ENCODE measurements at regions of chr2 and their contacts with region 1.

Region 1: GRCh38 chr2:215205787-215206186 is 67.4 kb upstream of the ABCA12 start:
- DNase-seq: no peak
- ATAC-seq: no peak
- H3K4me3 ChIP-seq: no peak overlapping the region
- H3K4me3 Mint-ChIP-seq: no peak overlapping the region
- H3K27ac ChIP-seq: no peak overlapping the region
- H3K27ac Mint-ChIP-seq: no peak overlapping the region
- H3K4me1 ChIP-seq: no peaks in the 10 kb centered on the region
- H3K4me1 Mint-ChIP-seq: no peaks in the 10 kb centered on the region
- H3K27me3 ChIP-seq: peaks cover 0 to 4% of the 10 kb centered on the region in 2 experiments
- H3K27me3 Mint-ChIP-seq: peaks cover 4% of the 10 kb centered on the region in 2 donors

Region 2: DNA sequence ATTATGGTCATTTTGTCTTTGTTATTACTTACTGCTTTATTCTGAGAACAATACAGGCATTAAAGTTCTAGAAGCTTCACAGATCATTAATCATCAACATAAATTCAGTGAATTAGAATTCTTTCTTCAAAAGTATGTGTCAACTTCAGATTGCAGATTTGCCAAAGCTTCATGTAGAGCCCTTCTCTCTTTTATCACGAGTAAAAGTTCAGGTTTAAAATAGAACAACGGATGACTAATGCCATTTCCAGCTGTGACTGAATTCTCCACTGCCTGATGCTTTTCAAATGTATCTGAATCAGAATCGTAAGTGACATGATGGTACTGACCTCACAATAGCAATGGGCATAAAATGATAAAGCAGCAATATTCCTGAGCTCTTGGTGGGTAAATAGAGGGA is 183.4 kb before region 1 on chr2:
- CTCF ChIA-PET with region 1: no interaction called
- POLR2A ChIA-PET with region 1: no interaction called
- DNase-seq: no peak
- ATAC-seq: no peak
- H3K4me3 ChIP-seq: no peak overlapping the region
- H3K4me3 Mint-ChIP-seq: no peak overlapping the region
- H3K27ac ChIP-seq: no peak overlapping the region
- H3K27ac Mint-ChIP-seq: no peak overlapping the region
- H3K4me1 ChIP-seq: no peaks in the 10 kb centered on the region
- H3K4me1 Mint-ChIP-seq: no peaks in the 10 kb centered on the region
- H3K27me3 ChIP-seq: no peaks in the 10 kb centered on the region
- H3K27me3 Mint-ChIP-seq: no peaks in the 10 kb centered on the region

Region 3: GRCh38 chr2:215241791-215242305 is 36.1 kb after region 1 on chr2:
- CTCF ChIA-PET with region 1: no interaction called
- POLR2A ChIA-PET with region 1: interaction called in 1 of 2 experiments, 10 read pairs
- DNase-seq: no peak
- ATAC-seq: no peak
- H3K4me3 ChIP-seq: no peak overlapping the region
- H3K4me3 Mint-ChIP-seq: no peak overlapping the region
- H3K27ac ChIP-seq: no peak overlapping the region
- H3K27ac Mint-ChIP-seq: no peak overlapping the region
- H3K4me1 ChIP-seq: no peaks in the 10 kb centered on the region
- H3K4me1 Mint-ChIP-seq: no peaks in the 10 kb centered on the region
- H3K27me3 ChIP-seq: peaks cover 0 to 4% of the 10 kb centered on the region in 2 experiments
- H3K27me3 Mint-ChIP-seq: peaks cover 5 to 8% of the 10 kb centered on the region in 2 donors

Region 4: DNA sequence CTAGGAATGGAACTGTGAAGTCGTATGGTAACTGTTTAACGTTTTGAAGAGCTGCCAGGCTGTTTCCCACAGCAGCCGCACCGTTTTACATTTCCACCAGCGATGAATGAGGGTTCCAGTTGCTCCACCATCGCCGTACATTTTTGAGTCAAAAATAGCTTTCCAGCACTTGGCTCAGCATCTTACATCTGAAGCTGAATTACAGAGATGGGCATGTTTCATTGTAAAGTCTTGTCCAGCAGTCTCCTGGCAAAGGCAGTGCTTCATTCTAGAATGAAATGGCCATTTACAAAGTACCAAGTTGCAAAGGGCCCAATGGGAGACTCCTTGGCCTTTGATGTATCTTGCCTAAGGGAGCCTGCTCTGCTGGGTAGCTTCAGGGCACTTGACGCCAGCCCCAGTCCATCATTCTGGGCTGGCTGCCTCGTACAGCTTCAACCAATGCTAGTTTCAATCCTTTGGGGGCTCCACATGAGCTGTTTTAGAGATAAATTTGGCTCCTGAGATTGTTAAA is 151.2 kb after region 1 on chr2:
- CTCF ChIA-PET with region 1: no interaction called
- POLR2A ChIA-PET with region 1: no interaction called
- DNase-seq: no peak
- ATAC-seq: no peak
- H3K4me3 ChIP-seq: no peak overlapping the region
- H3K4me3 Mint-ChIP-seq: no peak overlapping the region
- H3K27ac ChIP-seq: no peak overlapping the region
- H3K27ac Mint-ChIP-seq: no peak overlapping the region
- H3K4me1 ChIP-seq: no peaks in the 10 kb centered on the region
- H3K4me1 Mint-ChIP-seq: no peaks in the 10 kb centered on the region
- H3K27me3 ChIP-seq: no peaks in the 10 kb centered on the region
- H3K27me3 Mint-ChIP-seq: no peaks in the 10 kb centered on the region

Region 5: DNA sequence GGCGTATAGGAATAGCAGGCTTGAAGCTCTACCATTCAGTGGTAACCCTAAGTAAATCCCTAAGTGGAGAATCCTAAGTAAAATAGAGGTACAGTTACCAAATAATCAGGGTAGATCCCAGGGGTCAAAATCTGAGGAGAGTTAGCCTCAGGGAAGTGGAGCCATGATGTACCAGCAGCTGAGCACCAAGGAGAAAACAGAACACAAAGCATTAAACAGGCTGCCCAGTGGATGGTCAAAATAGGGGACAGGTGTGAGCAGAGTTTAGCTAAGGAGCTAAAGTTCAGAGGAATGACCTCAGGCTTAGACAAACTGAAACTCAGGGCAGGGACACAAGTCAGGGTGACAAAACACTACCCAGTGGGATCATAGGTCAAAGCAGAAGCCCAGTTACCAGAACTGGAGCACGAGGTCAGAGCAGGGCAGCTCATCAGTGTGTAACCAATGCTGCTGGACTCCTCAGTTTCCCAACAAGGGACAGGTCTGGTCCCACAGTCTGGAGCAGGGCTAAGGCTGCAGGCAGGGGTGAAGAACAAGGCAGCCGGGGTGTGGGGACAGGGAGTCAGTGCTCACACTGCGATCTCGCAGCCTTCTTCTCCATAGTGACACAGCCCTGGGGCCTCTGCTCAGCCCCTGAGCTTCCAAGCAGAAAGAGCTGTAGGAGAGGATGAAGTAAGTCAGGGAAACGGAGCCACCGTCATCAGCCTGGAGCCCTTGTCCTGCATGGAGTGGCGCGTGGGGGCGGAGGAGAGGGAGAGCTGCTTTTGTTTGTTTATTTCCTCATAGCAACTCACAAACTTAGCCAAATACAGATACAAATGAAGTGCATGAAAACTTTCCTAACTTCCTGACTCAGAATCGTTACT is 543.5 kb after region 1 on chr2:
- CTCF ChIA-PET with region 1: no interaction called
- POLR2A ChIA-PET with region 1: no interaction called
- DNase-seq: peak in 1 of 35 experiments; percentile 4
- ATAC-seq: no peak
- H3K4me3 ChIP-seq: no peak overlapping the region
- H3K4me3 Mint-ChIP-seq: no peak overlapping the region
- H3K27ac ChIP-seq: no peak overlapping the region
- H3K27ac Mint-ChIP-seq: no peak overlapping the region
- H3K4me1 ChIP-seq: peaks cover 12 to 16% of the 10 kb centered on the region in 2 experiments
- H3K4me1 Mint-ChIP-seq: peaks cover 27 to 36% (median 30%) of the 10 kb centered on the region in 3 donors
- H3K27me3 ChIP-seq: peaks cover 0 to 12% of the 10 kb centered on the region in 2 experiments
- H3K27me3 Mint-ChIP-seq: peaks cover 1 to 31% of the 10 kb centered on the region in 2 donors